Activated CD4-positive, alpha-beta T cell treated with anti-CD3 and anti-CD28 coated beads, Interleukin-2, amount 10 ng/mL, durations not matched to agents 7 days and 5 days (primary cell): ENCODE measurements at regions of chr17 and their contacts with region 1.

Region 1: DNA sequence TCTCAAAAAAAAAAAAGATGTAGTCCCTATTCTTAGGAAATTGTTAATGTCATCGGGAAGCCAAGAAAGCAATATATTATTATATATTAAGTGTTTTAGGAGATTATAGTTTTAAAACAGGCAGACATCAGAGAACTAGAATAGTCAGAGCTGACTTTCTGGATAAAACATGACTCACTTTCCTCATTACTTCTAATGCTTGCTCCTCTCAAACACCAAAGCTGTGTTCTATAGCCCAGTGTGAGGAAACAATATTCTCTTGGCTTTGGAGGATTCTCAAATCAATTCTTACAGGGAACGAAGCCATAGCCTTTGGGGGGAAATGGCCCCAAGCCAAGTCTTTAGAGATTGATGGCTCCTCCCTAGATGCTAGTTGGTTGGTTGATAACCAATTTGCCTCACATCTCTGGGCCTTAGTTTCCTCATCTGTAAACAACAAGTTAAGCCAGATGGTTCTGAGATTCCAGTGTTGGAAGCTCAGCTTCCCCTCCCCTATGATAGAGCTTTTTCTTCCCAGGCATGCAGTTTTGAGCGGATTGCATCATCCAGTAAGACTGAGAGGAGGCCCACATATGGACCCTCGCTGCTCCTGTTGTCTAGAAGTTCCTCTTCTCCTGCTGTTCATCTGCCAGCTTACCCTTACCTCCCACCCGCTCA is 12.4 kb downstream of the NMT1 start:
- DNase-seq: no peak
- H3K4me3 Mint-ChIP-seq: no peak overlapping the region
- H3K27ac Mint-ChIP-seq: no peak overlapping the region
- H3K4me1 Mint-ChIP-seq: peaks cover 18% of the 10 kb centered on the region
- H3K27me3 Mint-ChIP-seq: no peaks in the 10 kb centered on the region

Region 2: GRCh38 chr17:45060797-45061605 is 12.5 kb before region 1 on chr17 and contains the start of gene NMT1:
- CTCF ChIA-PET with region 1: interaction called, 10 read pairs
- POLR2A ChIA-PET with region 1: interaction called, 3 read pairs
- DNase-seq: peak; percentile 98
- H3K4me3 Mint-ChIP-seq: peak within 1 kb of the TSS; percentile 100
- H3K27ac Mint-ChIP-seq: peak within 1 kb of the TSS; percentile 100
- H3K4me1 Mint-ChIP-seq: peaks cover 40% of the 10 kb centered on the region
- H3K27me3 Mint-ChIP-seq: no peaks in the 10 kb centered on the region
- total RNA-seq, gene NMT1: 118 to 138 TPM